ENCODE measurements at regions of chr7 and their contacts with region 1.

Region 1: GRCh38 chr7:44880317-44881018 is 4.9 kb downstream of the PURB start:
- DNase-seq: no peak
- H3K4me3 Mint-ChIP-seq: peak overlapping the region; percentile 67
- H3K27ac Mint-ChIP-seq: peak overlapping the region; percentile 81
- H3K4me1 Mint-ChIP-seq: peaks cover 62% of the 10 kb centered on the region
- H3K27me3 Mint-ChIP-seq: no peaks in the 10 kb centered on the region

Region 2: DNA sequence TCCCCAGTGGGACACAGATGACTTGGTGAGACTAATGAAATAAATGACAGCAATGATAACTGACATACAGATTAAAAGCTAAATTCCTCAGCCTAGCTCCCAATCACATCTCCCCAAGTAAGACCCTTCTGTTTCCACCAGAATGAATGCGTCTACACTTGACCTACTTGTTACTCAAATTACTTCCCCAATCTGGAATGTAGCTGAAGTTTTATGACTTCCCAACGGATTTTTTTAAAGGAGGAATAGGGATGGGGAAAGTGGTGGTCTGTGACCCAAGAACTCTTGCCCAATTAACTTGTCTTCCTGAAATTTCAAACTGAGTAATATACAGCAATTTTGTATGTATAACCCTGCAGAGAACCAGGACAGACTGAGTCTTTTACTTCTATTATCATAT is 41.7 kb before region 1 on chr7:
- CTCF ChIA-PET with region 1: no interaction called
- POLR2A ChIA-PET with region 1: no interaction called
- intact Hi-C with region 1: no loop called
- DNase-seq: no peak
- H3K4me3 Mint-ChIP-seq: no peak overlapping the region
- H3K27ac Mint-ChIP-seq: no peak overlapping the region
- H3K4me1 Mint-ChIP-seq: peaks cover 8% of the 10 kb centered on the region
- H3K27me3 Mint-ChIP-seq: no peaks in the 10 kb centered on the region

Region 3: GRCh38 chr7:44858161-44858560 is 22.3 kb before region 1 on chr7:
- CTCF ChIA-PET with region 1: interaction called, 40 read pairs
- POLR2A ChIA-PET with region 1: interaction called, 6 read pairs
- intact Hi-C with region 1: loop called (anchors 1 kb)
- DNase-seq: no peak
- H3K4me3 Mint-ChIP-seq: no peak overlapping the region
- H3K27ac Mint-ChIP-seq: no peak overlapping the region
- H3K4me1 Mint-ChIP-seq: peaks cover 14% of the 10 kb centered on the region
- H3K27me3 Mint-ChIP-seq: no peaks in the 10 kb centered on the region